Stomach (tissue), 19 donors: ENCODE measurements at regions of chr14 and their contacts with region 1.

Region 1: GRCh38 chr14:60174352-60175245 is 9.4 kb upstream of the DHRS7 start:
- DNase-seq: no peak
- H3K4me3 ChIP-seq: no peak overlapping the region
- H3K27ac ChIP-seq: no peak overlapping the region
- H3K4me1 ChIP-seq: no peaks in the 10 kb centered on the region
- H3K27me3 ChIP-seq: no peaks in the 10 kb centered on the region
- CTCF ChIP-seq: no peak
- EP300 ChIP-seq: no peak
- POLR2A ChIP-seq: no peak

Region 2: DNA sequence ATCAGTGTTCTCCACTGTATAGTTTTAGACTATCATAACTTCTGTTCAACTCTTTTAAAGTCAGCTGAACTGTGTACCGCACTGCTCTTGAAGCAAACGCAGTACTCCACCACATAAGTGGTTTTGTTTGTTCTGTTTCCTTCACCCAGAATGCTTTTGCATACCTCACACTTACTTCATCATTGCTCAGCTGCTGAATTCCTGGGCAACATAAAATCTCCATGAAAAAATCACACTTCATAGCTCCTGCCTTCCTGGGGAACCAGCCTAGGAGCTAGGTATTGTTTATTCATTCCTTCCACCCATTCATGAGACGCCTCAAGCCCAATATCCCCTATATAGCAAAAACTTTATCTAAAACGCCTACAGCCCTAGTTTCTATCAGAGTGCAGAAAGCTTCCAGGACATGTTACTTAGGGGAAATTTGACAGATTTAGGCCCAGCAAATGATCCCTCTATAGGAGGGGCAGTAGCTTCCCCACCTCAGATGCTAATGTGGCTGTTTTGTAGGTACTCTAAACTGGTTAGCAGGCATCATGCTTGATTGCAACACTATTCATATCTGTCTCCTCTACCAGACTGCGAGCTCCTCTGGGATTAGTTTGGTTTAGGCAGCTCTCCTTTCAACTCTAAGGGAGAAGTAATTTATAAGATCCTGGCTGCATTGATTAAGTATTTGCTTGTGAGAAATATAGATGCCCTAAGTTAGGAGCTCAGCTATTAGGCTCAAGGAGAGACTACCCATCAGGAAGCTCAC is 210.2 kb before region 1 on chr14:
- intact Hi-C with region 1: loop called (anchors 5 kb)
- DNase-seq: peak in 1 of 2 donors; percentile 24
- H3K4me3 ChIP-seq: no peak overlapping the region
- H3K27ac ChIP-seq: no peak overlapping the region
- H3K4me1 ChIP-seq: peaks cover 0 to 10% (median 0%) of the 10 kb centered on the region in 4 donors
- H3K27me3 ChIP-seq: no peaks in the 10 kb centered on the region
- CTCF ChIP-seq: no peak
- EP300 ChIP-seq: no peak
- POLR2A ChIP-seq: no peak

Region 3: DNA sequence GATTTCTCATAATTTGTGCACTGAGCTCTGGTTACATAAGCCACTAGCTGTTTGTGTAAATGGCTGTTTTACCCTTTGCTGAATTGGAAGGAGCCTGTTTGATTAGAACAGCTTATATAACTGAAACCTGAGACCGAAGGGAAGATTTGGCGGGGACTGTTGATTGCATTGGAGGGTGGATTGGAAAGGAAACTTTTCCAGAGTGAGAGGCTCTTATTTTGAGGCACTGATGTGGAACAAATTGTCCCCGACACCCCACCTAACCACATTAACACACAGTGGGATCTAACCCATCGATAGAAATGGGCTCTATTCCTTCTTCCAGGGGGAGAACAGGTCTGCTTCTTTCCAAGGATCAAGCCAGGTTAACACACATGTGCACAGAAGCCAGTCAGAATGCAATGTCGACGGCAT is 1054.9 kb after region 1 on chr14:
- intact Hi-C with region 1: no loop called
- DNase-seq: peak; percentile 20 to 46
- H3K4me3 ChIP-seq: no peak overlapping the region
- H3K27ac ChIP-seq: peak overlapping the region in 3 of 5 donors; percentile 6 to 72 (median 8)
- H3K4me1 ChIP-seq: peaks cover 0 to 6% (median 0%) of the 10 kb centered on the region in 4 donors
- H3K27me3 ChIP-seq: no peaks in the 10 kb centered on the region
- CTCF ChIP-seq: no peak
- EP300 ChIP-seq: no peak
- POLR2A ChIP-seq: no peak